Ovary (tissue), 10 donors: ENCODE measurements at regions of chr13 and their contacts with region 1.

Region 1: GRCh38 chr13:94667190-94667589 is 45.2 kb downstream of the SOX21 start:
- DNase-seq: no peak
- H3K4me3 ChIP-seq: no peak overlapping the region
- H3K27ac ChIP-seq: no peak overlapping the region
- H3K4me1 ChIP-seq: no peaks in the 10 kb centered on the region
- H3K27me3 ChIP-seq: no peaks in the 10 kb centered on the region
- CTCF ChIP-seq: no peak
- EP300 ChIP-seq: no peak
- POLR2A ChIP-seq: no peak

Region 2: GRCh38 chr13:94683409-94683808 is 16.2 kb after region 1 on chr13:
- intact Hi-C with region 1: no loop called
- DNase-seq: no peak
- H3K4me3 ChIP-seq: no peak overlapping the region
- H3K27ac ChIP-seq: no peak overlapping the region
- H3K4me1 ChIP-seq: no peaks in the 10 kb centered on the region
- H3K27me3 ChIP-seq: no peaks in the 10 kb centered on the region
- CTCF ChIP-seq: no peak
- EP300 ChIP-seq: no peak
- POLR2A ChIP-seq: no peak

Region 3: GRCh38 chr13:96519380-96519779 is 1852.2 kb after region 1 on chr13:
- intact Hi-C with region 1: loop called in 1 of 4 experiments (anchors 5 kb)
- DNase-seq: no peak
- H3K4me3 ChIP-seq: no peak overlapping the region
- H3K27ac ChIP-seq: no peak overlapping the region
- H3K4me1 ChIP-seq: no peaks in the 10 kb centered on the region
- H3K27me3 ChIP-seq: no peaks in the 10 kb centered on the region
- CTCF ChIP-seq: no peak
- EP300 ChIP-seq: no peak
- POLR2A ChIP-seq: no peak